MCF 10A (cell line): ENCODE measurements at regions of chr9 and their contacts with region 1.

Region 1: DNA sequence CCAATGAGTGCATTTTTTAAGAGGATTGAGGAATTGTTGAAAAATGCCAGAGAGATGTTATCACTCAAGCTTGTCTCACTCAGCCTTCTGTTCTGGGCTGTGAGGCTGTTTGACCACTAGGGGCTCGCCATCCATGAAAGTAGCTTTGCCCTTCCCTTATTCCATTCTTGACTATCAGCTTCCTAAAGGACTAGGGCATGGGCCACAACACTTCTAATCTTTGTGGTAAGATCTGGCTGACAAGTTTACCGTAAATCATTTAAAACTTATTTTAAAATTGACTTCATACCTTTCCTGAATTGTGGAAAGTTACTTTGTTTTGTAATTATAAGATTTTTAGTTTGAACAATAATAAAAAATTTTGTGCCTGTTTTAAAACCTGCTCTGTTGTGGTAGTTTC is 49.5 kb downstream of the TJP2 start:
- DNase-seq: peak; percentile 60
- H3K4me3 Mint-ChIP-seq: no peak overlapping the region
- H3K27ac Mint-ChIP-seq: no peak overlapping the region
- H3K4me1 Mint-ChIP-seq: no peaks in the 10 kb centered on the region
- H3K27me3 Mint-ChIP-seq: no peaks in the 10 kb centered on the region
- CTCF ChIP-seq: peak; percentile 58

Region 2: GRCh38 chr9:69237702-69238295 is 14.2 kb after region 1 on chr9:
- CTCF ChIA-PET with region 1: interaction called, 19 read pairs
- POLR2A ChIA-PET with region 1: interaction called, 3 read pairs
- intact Hi-C with region 1: no loop called
- DNase-seq: no peak
- H3K4me3 Mint-ChIP-seq: no peak overlapping the region
- H3K27ac Mint-ChIP-seq: no peak overlapping the region
- H3K4me1 Mint-ChIP-seq: no peaks in the 10 kb centered on the region
- H3K27me3 Mint-ChIP-seq: no peaks in the 10 kb centered on the region
- CTCF ChIP-seq: no peak

Region 3: DNA sequence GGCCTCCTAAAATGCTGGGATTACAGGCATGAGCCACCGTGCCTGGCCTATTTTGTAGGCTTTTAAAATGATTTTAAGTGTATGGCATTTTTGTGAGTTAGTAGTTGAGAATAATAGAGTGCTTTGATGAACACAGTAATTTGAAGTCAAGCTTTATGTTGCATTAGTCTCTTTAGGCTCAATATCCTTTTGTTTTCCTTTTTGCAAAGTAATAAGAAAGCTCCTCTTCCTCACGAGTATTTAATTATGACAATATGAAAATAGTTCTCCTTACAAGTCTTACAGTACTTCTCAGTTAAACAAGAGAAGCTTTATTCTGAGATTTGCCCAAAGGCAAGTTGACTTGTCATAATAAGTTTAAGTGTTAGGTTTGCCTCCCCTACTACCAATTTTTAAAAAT is 19.5 kb after region 1 on chr9:
- CTCF ChIA-PET with region 1: interaction called, 19 read pairs
- POLR2A ChIA-PET with region 1: no interaction called
- intact Hi-C with region 1: no loop called
- DNase-seq: no peak
- H3K4me3 Mint-ChIP-seq: no peak overlapping the region
- H3K27ac Mint-ChIP-seq: no peak overlapping the region
- H3K4me1 Mint-ChIP-seq: no peaks in the 10 kb centered on the region
- H3K27me3 Mint-ChIP-seq: no peaks in the 10 kb centered on the region
- CTCF ChIP-seq: no peak